ENCODE measurements at regions of chr12 and their contacts with region 1.

Region 1: DNA sequence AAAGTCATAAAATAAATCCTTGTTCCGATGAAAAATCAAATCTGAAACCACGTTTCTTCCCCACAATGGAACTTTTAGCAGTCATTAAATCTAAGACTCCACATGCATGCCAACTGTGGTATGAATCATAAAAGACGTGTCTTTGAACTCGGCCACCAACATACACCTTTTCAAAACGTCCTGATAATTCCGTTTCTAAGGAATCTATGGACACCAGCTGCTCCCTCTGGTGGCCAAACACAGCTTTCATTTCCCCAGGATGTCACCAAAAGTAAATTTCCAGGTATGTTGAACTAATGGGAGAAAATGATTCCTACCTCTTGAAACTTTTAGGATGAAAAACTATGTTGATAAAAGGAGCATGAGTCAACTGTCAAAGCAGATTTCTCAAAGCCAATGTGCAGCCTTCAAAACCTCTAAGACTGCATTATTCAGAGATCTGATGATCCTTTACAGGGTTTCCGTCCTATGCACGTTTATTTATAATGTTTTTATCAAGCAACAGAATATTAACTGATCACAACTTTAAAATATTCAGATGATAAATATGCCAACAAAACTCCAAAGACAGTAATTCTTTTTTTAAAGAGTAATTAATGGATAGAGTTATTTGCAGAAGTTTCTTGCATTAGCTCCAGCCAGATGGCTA is 96.2 kb downstream of the CIT start:
- DNase-seq: peak; percentile 37
- ATAC-seq: peak; percentile 40
- H3K4me3 ChIP-seq: peak overlapping the region; percentile 22; the same call in 1 of the 2 replicates
- H3K27ac ChIP-seq: no peak overlapping the region
- H3K4me1 ChIP-seq: no peaks in the 10 kb centered on the region; the same call in 1 of the 2 replicates
- H3K27me3 ChIP-seq: no peaks in the 10 kb centered on the region
- CTCF ChIP-seq: peak; percentile 77
- POLR2A ChIP-seq: no peak
- RAD21 ChIP-seq: peak; percentile 50

Region 2: GRCh38 chr12:119667577-119668323 is 113.2 kb before region 1 on chr12 and contains the start of gene PRKAB1:
- CTCF ChIA-PET with region 1: interaction called, 3 read pairs
- POLR2A ChIA-PET with region 1: no interaction called
- dilution Hi-C with region 1: no loop called
- in situ Hi-C with region 1: no loop called
- intact Hi-C with region 1: loop called (anchors 2 kb)
- DNase-seq: peak; percentile 96
- ATAC-seq: peak; percentile 99
- H3K4me3 ChIP-seq: peak within 1 kb of the TSS; percentile 81
- H3K27ac ChIP-seq: peak within 1 kb of the TSS; percentile 80
- H3K4me1 ChIP-seq: no peaks in the 10 kb centered on the region
- H3K27me3 ChIP-seq: no peaks in the 10 kb centered on the region
- CTCF ChIP-seq: peak; percentile 96
- POLR2A ChIP-seq: peak; percentile 61
- RAD21 ChIP-seq: peak; percentile 60
- total RNA-seq, gene PRKAB1: 6.9 and 9.7 TPM in 2 replicates

Region 3: DNA sequence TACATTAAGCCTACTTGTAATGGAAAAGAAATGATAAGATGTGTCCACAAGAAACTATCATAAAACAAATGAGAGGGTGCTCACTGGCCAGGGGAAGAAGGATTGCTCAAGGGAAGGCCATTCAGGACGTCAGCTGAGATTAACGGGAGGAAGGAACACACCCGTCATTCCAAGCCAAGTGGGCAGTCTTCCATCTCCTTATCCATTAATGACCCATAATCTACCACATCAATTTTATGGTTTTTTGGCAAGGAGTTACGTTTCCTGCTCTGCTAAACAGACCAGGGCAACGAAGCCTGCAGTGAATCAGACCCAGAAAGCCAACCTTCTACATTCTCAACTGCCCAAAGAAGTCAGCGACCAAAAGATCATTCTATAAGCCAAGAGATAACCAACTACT is 87.9 kb before region 1 on chr12:
- CTCF ChIA-PET with region 1: interaction called, 8 read pairs
- POLR2A ChIA-PET with region 1: no interaction called
- dilution Hi-C with region 1: no loop called
- in situ Hi-C with region 1: no loop called
- intact Hi-C with region 1: loop called (anchors 2 kb)
- DNase-seq: peak; percentile 90
- ATAC-seq: peak; percentile 79
- H3K4me3 ChIP-seq: no peak overlapping the region
- H3K27ac ChIP-seq: peak overlapping the region; percentile 50; the same call in 1 of the 2 replicates
- H3K4me1 ChIP-seq: peaks cover 10% of the 10 kb centered on the region
- H3K27me3 ChIP-seq: no peaks in the 10 kb centered on the region
- CTCF ChIP-seq: no peak
- POLR2A ChIP-seq: no peak
- RAD21 ChIP-seq: no peak

Region 4: DNA sequence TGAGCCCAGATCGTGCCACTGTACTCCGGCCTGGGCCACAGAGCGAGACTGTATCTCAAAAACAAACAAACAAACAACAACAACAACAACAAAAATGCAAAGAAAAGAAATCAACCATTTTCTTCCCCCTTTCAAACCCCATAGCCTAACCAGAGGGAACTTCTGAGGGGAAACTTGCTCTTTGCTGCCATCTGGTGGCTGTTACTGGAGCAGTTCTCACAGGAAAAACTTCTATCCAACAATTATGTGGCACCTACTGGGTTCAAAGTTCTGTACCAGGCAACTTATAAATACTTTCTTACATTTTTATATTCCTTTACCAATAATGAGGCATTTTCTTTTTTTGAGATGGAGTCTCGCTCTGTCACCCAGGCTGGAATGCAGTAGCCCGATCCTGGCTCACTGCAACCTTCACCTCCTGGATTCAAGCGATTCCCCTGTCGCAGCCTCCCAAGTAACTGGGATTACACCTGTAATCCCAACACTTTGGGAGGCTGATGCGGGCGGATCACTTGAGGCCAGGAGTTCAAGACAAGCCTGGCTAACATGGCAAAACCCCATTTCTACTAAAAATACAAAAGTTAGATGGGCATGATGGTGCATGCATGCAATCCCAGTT is 157.2 kb after region 1 on chr12:
- CTCF ChIA-PET with region 1: interaction called, 3 read pairs
- POLR2A ChIA-PET with region 1: no interaction called
- dilution Hi-C with region 1: no loop called
- in situ Hi-C with region 1: no loop called
- intact Hi-C with region 1: loop called (anchors 1 kb)
- DNase-seq: peak; percentile 49
- ATAC-seq: peak; percentile 80
- H3K4me3 ChIP-seq: no peak overlapping the region
- H3K27ac ChIP-seq: no peak overlapping the region
- H3K4me1 ChIP-seq: no peaks in the 10 kb centered on the region
- H3K27me3 ChIP-seq: peaks cover 5% of the 10 kb centered on the region
- CTCF ChIP-seq: peak; percentile 72
- POLR2A ChIP-seq: no peak
- RAD21 ChIP-seq: peak; percentile 70